ENCODE measurements at regions of chr10 and their contacts with region 1.

Region 1: DNA sequence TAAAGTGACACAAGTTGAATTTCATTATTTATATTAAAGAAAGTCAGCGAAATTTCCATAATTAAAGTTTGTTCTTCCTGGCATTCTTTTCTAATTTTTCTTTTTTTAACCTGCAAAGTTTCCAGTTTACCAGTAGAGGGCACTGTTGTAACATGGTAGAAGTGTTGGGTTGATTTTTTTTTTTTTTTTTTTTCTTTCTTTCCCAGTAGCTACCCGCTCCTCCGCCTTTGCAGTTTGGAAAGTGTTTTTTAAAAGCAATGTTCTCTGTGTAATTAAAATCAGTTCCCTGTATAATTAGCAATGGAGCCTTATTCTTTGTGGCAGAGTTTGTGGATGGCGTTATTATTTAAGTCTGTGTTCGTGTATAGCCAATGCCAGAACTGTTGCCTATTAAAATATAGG is 53.7 kb downstream of the TAF3 start:
- DNase-seq: peak in 1 of 2 experiments; percentile 5
- H3K4me3 ChIP-seq: peak overlapping the region; percentile 54; the same call in 1 of the 2 replicates
- H3K27ac ChIP-seq: no peak overlapping the region
- H3K4me1 ChIP-seq: peaks cover 8% of the 10 kb centered on the region
- H3K27me3 ChIP-seq: no peaks in the 10 kb centered on the region
- CTCF ChIP-seq: peak; percentile 74

Region 2: DNA sequence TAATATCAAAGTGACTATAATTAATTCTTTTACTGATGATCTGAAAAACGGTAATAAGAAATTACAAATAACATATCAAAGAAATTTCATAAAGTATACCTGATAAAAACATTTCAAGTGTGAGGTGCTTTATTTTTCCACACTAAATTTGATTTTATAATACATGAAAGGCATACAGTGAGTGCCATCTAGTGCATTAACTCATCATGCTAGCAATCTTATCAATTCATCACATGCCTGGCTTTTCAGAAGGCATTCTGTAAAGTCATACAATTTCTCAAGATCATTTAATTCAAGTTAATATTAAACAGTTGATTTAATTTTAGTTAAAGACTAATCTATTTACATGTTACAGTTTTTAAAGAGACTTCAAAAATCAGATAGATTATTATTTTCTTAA is 1203.4 kb after region 1 on chr10:
- CTCF ChIA-PET with region 1: no interaction called
- POLR2A ChIA-PET with region 1: no interaction called
- intact Hi-C with region 1: loop called (anchors 10 kb)
- DNase-seq: no peak
- H3K4me3 ChIP-seq: no peak overlapping the region
- H3K27ac ChIP-seq: no peak overlapping the region
- H3K4me1 ChIP-seq: peaks cover 5% of the 10 kb centered on the region; the same call in 1 of the 2 replicates
- H3K27me3 ChIP-seq: no peaks in the 10 kb centered on the region
- CTCF ChIP-seq: no peak

Measured in PC-9 (cell line).